Naive thymus-derived CD4-positive, alpha-beta T cell (primary cell): ENCODE measurements at regions of chr10 and their contacts with region 1.

Region 1: GRCh38 chr10:32445740-32446535 is at the start of gene CCDC7:
- DNase-seq: peak; percentile 78 to 90 (median 88)
- ATAC-seq: peak; percentile 98
- H3K4me3 ChIP-seq: peak within 1 kb of the TSS; percentile 79
- H3K4me3 Mint-ChIP-seq: peak within 1 kb of the TSS; percentile 85 to 98 (median 94)
- H3K27ac ChIP-seq: peak within 1 kb of the TSS; percentile 95
- H3K27ac Mint-ChIP-seq: peak within 1 kb of the TSS; percentile 96 to 100 (median 99)
- H3K4me1 ChIP-seq: peaks cover 8 to 9% of the 10 kb centered on the region in 2 donors
- H3K4me1 Mint-ChIP-seq: peaks cover 2 to 35% (median 25%) of the 10 kb centered on the region in 7 donors
- H3K27me3 ChIP-seq: no peaks in the 10 kb centered on the region
- H3K27me3 Mint-ChIP-seq: peaks cover 0 to 4% (median 0%) of the 10 kb centered on the region in 5 donors
- total RNA-seq, gene CCDC7: 19.5 to 98.7 (median 69.5) TPM

Region 2: DNA sequence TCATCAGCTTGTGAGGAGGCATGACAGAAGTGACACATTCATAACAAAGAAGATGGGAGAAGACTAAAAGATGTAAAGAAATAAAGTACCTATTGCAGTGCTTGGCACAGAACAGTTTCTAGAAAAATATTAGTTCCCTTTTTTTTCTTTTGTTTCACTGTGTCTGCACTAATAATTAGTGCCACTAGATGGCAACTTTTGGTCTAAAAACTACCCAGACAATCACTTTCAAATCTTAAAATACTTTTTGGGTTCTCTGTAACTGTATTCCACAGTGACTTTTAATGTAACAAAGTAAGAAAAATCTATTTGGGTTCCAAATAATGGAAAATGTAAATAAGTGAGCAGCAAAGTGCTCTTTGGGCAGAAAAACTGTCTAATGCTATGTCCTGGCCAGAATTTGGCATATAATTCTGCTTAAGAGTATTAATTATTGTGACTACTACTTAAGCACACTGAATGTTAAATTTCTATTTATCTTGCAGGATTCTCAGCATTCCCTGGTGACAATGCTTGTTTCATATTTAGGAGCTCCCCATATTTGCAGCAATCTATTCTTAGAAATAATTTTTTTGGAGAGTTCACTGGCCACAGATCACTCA is 254.9 kb before region 1 on chr10:
- CTCF ChIA-PET with region 1: no interaction called
- POLR2A ChIA-PET with region 1: no interaction called
- intact Hi-C with region 1: loop called in 1 of 2 experiments (anchors 5 kb)
- DNase-seq: peak in 6 of 9 donors; percentile 17 to 49 (median 42)
- ATAC-seq: peak; percentile 70
- H3K4me3 ChIP-seq: no peak overlapping the region
- H3K4me3 Mint-ChIP-seq: no peak overlapping the region
- H3K27ac ChIP-seq: no peak overlapping the region
- H3K27ac Mint-ChIP-seq: peak overlapping the region in 1 of 9 donors; percentile 3
- H3K4me1 ChIP-seq: no peaks in the 10 kb centered on the region
- H3K4me1 Mint-ChIP-seq: peaks cover 0 to 5% (median 4%) of the 10 kb centered on the region in 7 donors
- H3K27me3 ChIP-seq: no peaks in the 10 kb centered on the region
- H3K27me3 Mint-ChIP-seq: peaks cover 0 to 9% (median 0%) of the 10 kb centered on the region in 5 donors

Region 3: GRCh38 chr10:32386623-32387260 is 59.2 kb before region 1 on chr10:
- CTCF ChIA-PET with region 1: interaction called, 6 read pairs
- POLR2A ChIA-PET with region 1: interaction called, 13 read pairs
- intact Hi-C with region 1: no loop called
- DNase-seq: peak in 3 of 9 donors; percentile 10 to 17 (median 15)
- ATAC-seq: no peak
- H3K4me3 ChIP-seq: no peak overlapping the region
- H3K4me3 Mint-ChIP-seq: peak overlapping the region in 9 of 10 donors; percentile 17 to 82 (median 66)
- H3K27ac ChIP-seq: no peak overlapping the region
- H3K27ac Mint-ChIP-seq: peak overlapping the region in 8 of 9 donors; percentile 2 to 78 (median 42)
- H3K4me1 ChIP-seq: peaks cover 0 to 7% of the 10 kb centered on the region in 2 donors
- H3K4me1 Mint-ChIP-seq: peaks cover 7 to 29% (median 12%) of the 10 kb centered on the region in 7 donors
- H3K27me3 ChIP-seq: no peaks in the 10 kb centered on the region
- H3K27me3 Mint-ChIP-seq: peaks cover 0 to 3% (median 0%) of the 10 kb centered on the region in 5 donors

Region 4: DNA sequence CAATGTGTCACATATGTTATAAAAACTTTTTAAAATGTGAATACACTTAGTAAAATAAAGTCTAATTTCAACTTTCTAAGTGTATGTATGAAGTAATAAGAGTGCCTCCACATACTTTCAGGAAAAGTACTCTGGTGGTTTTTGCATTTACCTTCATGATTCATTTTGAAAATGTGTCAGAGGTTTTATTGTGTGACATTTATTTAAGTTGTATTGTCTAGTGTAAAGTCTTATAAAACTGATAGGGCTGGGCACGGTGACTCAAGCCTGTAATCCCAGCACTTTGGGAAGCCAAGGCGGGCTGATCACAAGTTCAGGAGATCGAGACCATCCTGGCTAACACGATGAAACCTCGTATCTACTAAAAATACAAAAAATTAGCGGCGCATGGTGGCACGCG is 285.6 kb after region 1 on chr10:
- CTCF ChIA-PET with region 1: no interaction called
- POLR2A ChIA-PET with region 1: no interaction called
- intact Hi-C with region 1: loop called in 1 of 2 experiments (anchors 10 kb)
- DNase-seq: no peak
- ATAC-seq: no peak
- H3K4me3 ChIP-seq: no peak overlapping the region
- H3K4me3 Mint-ChIP-seq: no peak overlapping the region
- H3K27ac ChIP-seq: no peak overlapping the region
- H3K27ac Mint-ChIP-seq: no peak overlapping the region
- H3K4me1 ChIP-seq: no peaks in the 10 kb centered on the region
- H3K4me1 Mint-ChIP-seq: no peaks in the 10 kb centered on the region
- H3K27me3 ChIP-seq: no peaks in the 10 kb centered on the region
- H3K27me3 Mint-ChIP-seq: no peaks in the 10 kb centered on the region

Region 5: DNA sequence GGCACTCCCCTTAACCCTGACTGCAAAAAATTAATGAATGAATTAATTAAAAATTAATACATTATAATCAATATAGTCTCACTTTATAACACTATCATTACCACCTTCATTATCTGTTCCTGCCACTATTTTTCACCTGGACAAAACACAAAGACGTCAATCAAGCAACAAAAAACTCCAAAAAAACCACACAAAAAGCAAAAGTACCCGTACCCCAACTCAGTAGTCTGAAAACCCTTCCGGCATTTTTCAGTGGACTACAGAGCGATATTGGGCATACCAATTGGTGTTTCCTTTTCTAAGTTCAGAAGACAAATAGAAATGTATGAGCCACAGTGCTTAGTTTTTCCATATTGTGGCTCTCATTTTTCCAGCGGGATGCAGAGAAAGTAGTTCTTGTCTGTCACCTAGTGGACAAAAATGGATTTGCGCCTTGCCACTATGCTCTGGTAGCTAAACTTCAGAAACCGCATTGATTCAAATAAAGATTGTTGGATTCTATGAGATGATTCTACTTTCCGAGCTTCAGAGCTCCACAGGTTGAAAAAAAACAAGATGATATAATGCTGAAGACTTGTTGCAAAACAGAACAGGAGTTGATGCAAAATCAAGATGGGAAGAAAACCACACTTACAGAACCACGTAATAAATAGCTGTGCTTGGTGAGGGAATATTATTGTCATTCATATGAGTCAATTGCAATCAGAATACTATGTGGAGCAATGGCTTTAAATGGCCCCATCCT is 562.7 kb after region 1 on chr10:
- CTCF ChIA-PET with region 1: interaction called, 4 read pairs
- POLR2A ChIA-PET with region 1: interaction called, 7 read pairs
- intact Hi-C with region 1: loop called (anchors 1 kb)
- DNase-seq: peak in 8 of 9 donors; percentile 25 to 65 (median 48)
- ATAC-seq: peak; percentile 50
- H3K4me3 ChIP-seq: peak overlapping the region; percentile 36
- H3K4me3 Mint-ChIP-seq: peak overlapping the region in 9 of 10 donors; percentile 56 to 79 (median 70)
- H3K27ac ChIP-seq: no peak overlapping the region
- H3K27ac Mint-ChIP-seq: peak overlapping the region in 5 of 9 donors; percentile 16 to 56 (median 26)
- H3K4me1 ChIP-seq: peaks cover 6 to 42% of the 10 kb centered on the region in 2 donors
- H3K4me1 Mint-ChIP-seq: peaks cover 17 to 39% (median 33%) of the 10 kb centered on the region in 7 donors
- H3K27me3 ChIP-seq: no peaks in the 10 kb centered on the region
- H3K27me3 Mint-ChIP-seq: peaks cover 0 to 9% (median 0%) of the 10 kb centered on the region in 5 donors

Region 6: DNA sequence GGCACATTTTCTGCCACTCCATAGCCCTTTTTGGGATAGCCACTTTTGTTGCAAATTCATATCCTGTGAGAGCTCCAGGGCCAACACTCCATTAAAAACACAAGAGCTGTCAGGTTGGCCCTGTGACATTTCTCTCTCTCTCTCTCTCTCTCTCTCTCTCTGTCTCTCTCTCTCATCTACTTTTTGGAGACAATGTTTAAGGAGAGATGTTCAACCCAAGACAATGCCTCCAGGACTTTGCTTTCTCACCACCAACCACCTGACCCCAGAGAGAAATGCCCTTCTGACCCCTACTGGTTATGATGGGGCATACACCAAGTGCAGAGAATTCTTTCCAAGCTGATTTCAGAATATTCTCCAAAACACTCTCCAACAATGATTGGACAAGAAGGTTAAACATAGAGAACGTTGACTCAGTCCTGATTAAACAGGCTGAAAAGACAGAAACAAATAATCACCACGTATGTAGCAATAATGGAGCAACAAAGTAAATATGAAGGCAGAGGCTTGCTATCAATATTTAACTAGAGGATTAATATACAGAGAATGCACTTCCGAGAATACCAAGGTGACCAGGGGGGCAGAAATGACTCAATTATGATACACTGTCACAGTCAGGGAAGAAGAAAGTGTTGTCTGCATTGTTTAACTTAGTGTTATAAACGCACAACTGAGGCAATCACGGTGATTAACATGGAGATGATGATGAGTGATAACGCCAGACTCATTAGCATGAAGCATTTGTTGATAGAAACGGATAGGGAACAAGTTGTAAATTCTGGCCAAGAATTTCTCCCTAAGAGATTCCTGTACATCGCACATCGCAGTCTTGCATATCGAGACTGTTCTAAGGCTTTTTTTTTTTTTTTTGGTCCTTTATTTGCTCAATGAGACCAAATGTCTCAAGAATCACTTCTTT is 710.0 kb after region 1 on chr10:
- CTCF ChIA-PET with region 1: interaction called, 3 read pairs
- POLR2A ChIA-PET with region 1: no interaction called
- intact Hi-C with region 1: loop called in 1 of 2 experiments (anchors 5 kb)
- DNase-seq: peak in 7 of 9 donors; percentile 28 to 65 (median 55)
- ATAC-seq: peak; percentile 85
- H3K4me3 ChIP-seq: no peak overlapping the region
- H3K4me3 Mint-ChIP-seq: no peak overlapping the region
- H3K27ac ChIP-seq: no peak overlapping the region
- H3K27ac Mint-ChIP-seq: peak overlapping the region in 8 of 9 donors; percentile 0 to 88 (median 41)
- H3K4me1 ChIP-seq: peaks cover 15 to 44% of the 10 kb centered on the region in 2 donors
- H3K4me1 Mint-ChIP-seq: peaks cover 8 to 41% (median 35%) of the 10 kb centered on the region in 7 donors
- H3K27me3 ChIP-seq: no peaks in the 10 kb centered on the region
- H3K27me3 Mint-ChIP-seq: no peaks in the 10 kb centered on the region